Heart right ventricle (tissue), 16 donors: ENCODE measurements at regions of chr1 and their contacts with region 1.

Region 1: GRCh38 chr1:158124999-158125398 is 55.7 kb upstream of the CD1D start:
- DNase-seq: peak; percentile 72 to 94
- ATAC-seq: peak; percentile 93 to 99 (median 97)
- H3K4me3 ChIP-seq: peak overlapping the region in 1 of 10 donors; percentile 28
- H3K27ac ChIP-seq: no peak overlapping the region
- H3K4me1 ChIP-seq: peaks cover 0 to 4% (median 0%) of the 10 kb centered on the region in 9 donors
- H3K27me3 ChIP-seq: peaks cover 0 to 17% (median 8%) of the 10 kb centered on the region in 7 donors
- CTCF ChIP-seq: peak; percentile 86 to 96 (median 93)

Region 2: GRCh38 chr1:157580179-157580827 is 544.7 kb before region 1 on chr1:
- intact Hi-C with region 1: loop called in 4 of 10 experiments (anchors 5 to 10 kb)
- DNase-seq: peak in 1 of 2 donors; percentile 32
- ATAC-seq: no peak
- H3K4me3 ChIP-seq: no peak overlapping the region
- H3K27ac ChIP-seq: no peak overlapping the region
- H3K4me1 ChIP-seq: no peaks in the 10 kb centered on the region
- H3K27me3 ChIP-seq: peaks cover 0 to 37% (median 24%) of the 10 kb centered on the region in 7 donors
- CTCF ChIP-seq: peak; percentile 44 to 80 (median 69)

Region 3: GRCh38 chr1:157963713-157964112 is 161.3 kb before region 1 on chr1:
- intact Hi-C with region 1: loop called in 9 of 10 experiments (anchors 1 to 5 kb)
- DNase-seq: peak; percentile 57 to 73
- ATAC-seq: peak; percentile 62 to 88 (median 82)
- H3K4me3 ChIP-seq: no peak overlapping the region
- H3K27ac ChIP-seq: no peak overlapping the region
- H3K4me1 ChIP-seq: peaks cover 0 to 16% (median 3%) of the 10 kb centered on the region in 9 donors
- H3K27me3 ChIP-seq: peaks cover 0 to 32% (median 17%) of the 10 kb centered on the region in 7 donors
- CTCF ChIP-seq: peak; percentile 83 to 97 (median 94)

Region 4: GRCh38 chr1:157984469-157984868 is 140.5 kb before region 1 on chr1:
- intact Hi-C with region 1: loop called in 1 of 10 experiments (anchors 5 kb)
- DNase-seq: no peak
- ATAC-seq: no peak
- H3K4me3 ChIP-seq: no peak overlapping the region
- H3K27ac ChIP-seq: no peak overlapping the region
- H3K4me1 ChIP-seq: no peaks in the 10 kb centered on the region
- H3K27me3 ChIP-seq: peaks cover 0 to 2% (median 0%) of the 10 kb centered on the region in 7 donors
- CTCF ChIP-seq: no peak

Region 5: DNA sequence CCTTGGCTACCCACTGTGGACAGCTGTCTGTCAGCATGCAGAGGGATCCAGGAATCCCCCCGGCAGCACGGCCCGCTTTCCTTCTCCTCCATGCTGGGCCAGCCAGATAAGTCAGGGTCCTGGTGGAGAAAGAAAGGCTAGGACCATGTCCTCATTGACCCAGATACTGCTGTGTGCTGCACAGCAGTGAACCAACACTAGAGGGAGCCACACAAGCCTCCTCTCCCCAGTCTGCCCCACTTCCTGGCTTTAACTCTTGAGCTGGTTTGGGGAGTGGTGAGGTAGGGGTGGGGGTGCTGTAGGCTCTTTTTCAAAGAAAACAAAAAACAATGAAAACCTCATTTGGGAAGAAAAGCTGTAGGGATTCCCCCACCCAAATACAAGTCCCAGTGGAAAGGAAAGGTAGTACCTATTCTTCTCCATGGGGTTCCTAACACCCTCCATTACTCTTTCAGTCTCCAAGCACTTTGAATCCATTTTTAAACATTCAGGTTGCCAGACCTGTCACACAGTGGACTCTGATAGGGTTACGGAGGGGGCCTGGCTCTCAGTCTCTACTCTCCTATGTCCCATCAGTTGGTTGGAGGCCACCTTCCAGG is 29.2 kb before region 1 on chr1:
- intact Hi-C with region 1: loop called in 1 of 10 experiments (anchors 2 kb)
- DNase-seq: no peak
- ATAC-seq: peak in 6 of 8 donors; percentile 43 to 62 (median 54)
- H3K4me3 ChIP-seq: no peak overlapping the region
- H3K27ac ChIP-seq: peak overlapping the region in 1 of 10 donors; percentile 10
- H3K4me1 ChIP-seq: peaks cover 0 to 16% (median 2%) of the 10 kb centered on the region in 9 donors
- H3K27me3 ChIP-seq: no peaks in the 10 kb centered on the region
- CTCF ChIP-seq: peak; percentile 40 to 77 (median 64)